ENCODE measurements at regions of chrX and their contacts with region 1.

Region 1: DNA sequence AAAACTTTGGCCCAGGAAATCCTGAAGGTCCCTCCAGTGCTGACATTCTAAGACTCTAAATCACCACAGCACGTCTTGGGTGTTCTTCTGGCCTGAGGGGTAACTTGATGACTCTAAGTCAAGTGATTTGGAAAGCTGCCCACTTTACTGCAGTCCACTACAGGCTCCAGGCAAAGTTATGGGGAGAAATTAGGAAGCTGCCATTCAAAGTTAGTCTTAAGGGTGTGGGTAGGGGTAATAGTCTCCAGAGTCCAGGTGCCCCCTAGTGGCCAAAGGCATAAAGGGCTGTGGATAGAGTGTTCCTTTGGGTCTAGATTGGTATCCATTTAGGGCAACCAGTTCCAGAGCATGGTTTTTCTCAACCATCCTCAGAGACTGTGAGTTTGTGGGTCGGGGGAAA is 38.7 kb upstream of the SLC16A2 start:
- DNase-seq: peak; percentile 63
- ATAC-seq: peak; percentile 80

Region 2: DNA sequence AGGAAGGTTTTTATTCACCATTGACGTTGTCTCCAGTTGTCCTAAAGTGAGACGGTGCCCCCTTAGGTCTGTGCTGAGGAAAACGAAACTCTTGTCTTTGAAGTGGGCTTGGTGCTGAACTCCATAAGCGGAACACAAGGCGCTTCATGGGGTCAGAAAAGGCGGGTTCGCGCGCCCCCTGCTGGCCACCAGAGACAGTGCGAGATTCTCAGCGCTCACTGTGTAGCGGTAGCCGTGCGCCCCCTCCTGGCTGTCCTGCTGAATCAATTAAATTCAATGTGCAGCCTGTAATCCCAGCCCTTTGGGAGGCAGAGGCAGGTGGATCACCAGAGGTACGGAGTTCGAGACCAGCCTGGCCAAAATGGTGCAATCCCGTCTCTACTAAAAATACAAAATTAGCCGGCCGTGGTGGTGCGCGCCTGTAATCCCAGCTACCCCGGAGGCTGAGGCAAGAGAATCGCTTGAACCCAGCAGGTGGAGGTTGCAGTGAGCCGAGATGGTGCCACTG is 167.7 kb after region 1 on chrX:
- intact Hi-C with region 1: loop called (anchors 2 kb)
- DNase-seq: peak; percentile 90
- ATAC-seq: peak; percentile 87